IMR-90 (cell line): ENCODE measurements at regions of chr14 and their contacts with region 1.

Region 1: GRCh38 chr14:95534299-95535225 is at the start of gene GLRX5:
- DNase-seq: peak; percentile 100
- ATAC-seq: peak; percentile 86
- H3K4me3 ChIP-seq: peak within 1 kb of the TSS; percentile 71
- H3K27ac ChIP-seq: peak within 1 kb of the TSS; percentile 90
- H3K4me1 ChIP-seq: peaks cover 13% of the 10 kb centered on the region
- H3K27me3 ChIP-seq: no peaks in the 10 kb centered on the region
- CTCF ChIP-seq: no peak
- POLR2A ChIP-seq: peak; percentile 68
- RAD21 ChIP-seq: no peak
- total RNA-seq, gene GLRX5: 32.4 and 59.2 TPM in 2 replicates

Region 2: DNA sequence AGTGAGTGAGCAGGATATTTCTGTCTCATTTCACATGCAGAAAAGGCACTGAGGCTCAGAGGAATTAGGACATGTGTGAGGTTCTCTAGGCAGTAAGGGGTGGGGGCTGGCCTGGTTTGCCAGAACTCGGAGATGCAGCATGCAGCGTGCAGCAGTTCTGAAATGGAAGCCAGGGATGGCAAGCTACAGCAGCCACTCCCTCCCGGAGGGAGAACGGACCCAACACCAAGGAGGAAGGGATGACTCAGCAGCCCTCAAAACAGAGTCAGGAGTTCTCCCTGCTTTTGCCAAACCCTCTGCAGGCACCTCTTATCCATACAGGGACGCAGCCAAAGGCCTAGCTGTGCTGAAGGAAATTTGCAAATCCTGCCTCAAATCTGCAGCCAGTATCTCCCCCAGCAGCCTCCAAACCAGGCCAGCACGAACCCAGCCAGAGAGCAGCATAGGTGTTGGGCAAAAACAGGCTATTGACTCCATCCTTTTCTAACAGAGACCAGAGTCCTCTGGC is 932.6 kb before region 1 on chr14:
- CTCF ChIA-PET with region 1: no interaction called
- POLR2A ChIA-PET with region 1: no interaction called
- dilution Hi-C with region 1: no loop called
- in situ Hi-C with region 1: no loop called
- intact Hi-C with region 1: loop called (anchors 5 kb)
- DNase-seq: peak; percentile 89
- ATAC-seq: peak; percentile 69
- H3K4me3 ChIP-seq: no peak overlapping the region
- H3K27ac ChIP-seq: peak overlapping the region; percentile 96; the same call in 1 of the 2 replicates
- H3K4me1 ChIP-seq: peaks cover 20% of the 10 kb centered on the region
- H3K27me3 ChIP-seq: no peaks in the 10 kb centered on the region; the same call in 1 of the 2 replicates
- CTCF ChIP-seq: no peak
- POLR2A ChIP-seq: no peak
- RAD21 ChIP-seq: no peak

Region 3: GRCh38 chr14:95227279-95227860 is 307.2 kb before region 1 on chr14:
- CTCF ChIA-PET with region 1: no interaction called
- POLR2A ChIA-PET with region 1: no interaction called
- dilution Hi-C with region 1: no loop called
- in situ Hi-C with region 1: no loop called
- intact Hi-C with region 1: loop called (anchors 10 kb)
- DNase-seq: peak; percentile 12
- ATAC-seq: peak; percentile 49
- H3K4me3 ChIP-seq: no peak overlapping the region
- H3K27ac ChIP-seq: no peak overlapping the region
- H3K4me1 ChIP-seq: peaks cover 2% of the 10 kb centered on the region; the same call in 1 of the 2 replicates
- H3K27me3 ChIP-seq: no peaks in the 10 kb centered on the region; the same call in 1 of the 2 replicates
- CTCF ChIP-seq: no peak
- POLR2A ChIP-seq: no peak
- RAD21 ChIP-seq: no peak

Region 4: DNA sequence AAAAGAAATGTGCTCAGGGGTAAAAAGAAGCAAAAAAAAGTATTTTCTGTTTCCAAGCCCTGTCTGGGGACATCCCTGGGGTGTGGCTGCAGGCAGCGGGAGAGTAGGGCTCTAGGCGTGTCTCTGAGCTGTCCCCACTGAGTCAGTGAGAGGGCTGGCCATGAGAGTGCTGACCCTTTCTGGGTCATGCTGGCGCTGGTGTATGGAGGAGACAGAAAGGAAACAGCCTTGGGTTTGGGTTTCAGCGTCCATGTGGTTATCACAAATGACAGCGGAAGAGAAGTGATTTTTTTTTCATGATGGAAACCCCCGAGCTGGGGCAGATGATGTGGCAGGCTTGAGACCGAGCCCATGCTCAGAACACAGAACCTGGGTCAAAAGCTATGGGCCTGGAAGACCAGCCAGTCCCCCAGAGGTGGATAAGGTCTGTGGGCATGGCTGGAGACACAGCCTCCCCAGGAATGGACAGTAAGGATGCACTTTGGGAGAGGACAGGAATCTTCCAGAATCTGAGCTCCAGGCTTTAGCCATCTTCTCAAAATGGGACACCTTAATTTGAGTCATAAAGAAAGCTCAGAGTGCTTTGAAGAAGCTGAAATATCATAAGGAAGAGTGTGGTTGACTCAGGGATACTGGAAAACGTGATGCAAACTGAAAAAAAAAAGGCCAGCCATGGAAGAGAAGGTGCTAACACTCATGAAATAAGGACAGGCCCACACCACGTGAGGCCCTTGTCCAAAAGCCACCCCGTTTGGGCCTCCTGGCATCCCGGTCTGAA is 54.3 kb before region 1 on chr14:
- CTCF ChIA-PET with region 1: no interaction called
- POLR2A ChIA-PET with region 1: no interaction called
- dilution Hi-C with region 1: no loop called
- in situ Hi-C with region 1: no loop called
- intact Hi-C with region 1: no loop called
- DNase-seq: peak; percentile 31
- ATAC-seq: no peak
- H3K4me3 ChIP-seq: no peak overlapping the region
- H3K27ac ChIP-seq: no peak overlapping the region
- H3K4me1 ChIP-seq: peaks cover 29% of the 10 kb centered on the region
- H3K27me3 ChIP-seq: no peaks in the 10 kb centered on the region
- CTCF ChIP-seq: no peak
- POLR2A ChIP-seq: no peak
- RAD21 ChIP-seq: no peak

Region 5: DNA sequence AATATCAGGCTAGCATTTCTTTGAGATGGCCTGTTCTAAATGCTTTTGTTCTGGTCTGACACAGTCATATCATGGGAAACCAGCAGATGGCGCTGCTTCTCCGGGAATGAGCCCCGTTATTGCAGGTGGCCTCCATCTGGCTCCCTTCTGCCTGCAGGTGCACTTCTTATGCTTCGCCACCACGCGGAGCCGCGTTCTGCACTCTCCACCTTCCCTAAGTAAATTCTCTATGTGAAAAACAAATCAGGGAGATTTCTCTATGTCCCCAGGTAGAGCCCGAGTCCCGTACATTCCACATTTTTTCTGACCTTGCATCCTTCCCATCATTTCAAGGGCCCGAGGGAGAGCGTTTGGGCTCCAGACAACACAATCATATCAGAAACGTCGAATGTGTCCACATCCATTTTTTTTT is 26.4 kb after region 1 on chr14:
- CTCF ChIA-PET with region 1: no interaction called
- POLR2A ChIA-PET with region 1: interaction called, 13 read pairs
- dilution Hi-C with region 1: no loop called
- in situ Hi-C with region 1: no loop called
- intact Hi-C with region 1: no loop called
- DNase-seq: peak; percentile 82
- ATAC-seq: peak; percentile 88
- H3K4me3 ChIP-seq: no peak overlapping the region
- H3K27ac ChIP-seq: no peak overlapping the region
- H3K4me1 ChIP-seq: no peaks in the 10 kb centered on the region
- H3K27me3 ChIP-seq: peaks cover 7% of the 10 kb centered on the region
- CTCF ChIP-seq: peak; percentile 98
- POLR2A ChIP-seq: no peak
- RAD21 ChIP-seq: peak; percentile 96

Region 6: GRCh38 chr14:95609387-95609990 is 74.9 kb after region 1 on chr14:
- CTCF ChIA-PET with region 1: no interaction called
- POLR2A ChIA-PET with region 1: no interaction called
- dilution Hi-C with region 1: no loop called
- in situ Hi-C with region 1: no loop called
- intact Hi-C with region 1: no loop called
- DNase-seq: peak; percentile 23
- ATAC-seq: peak; percentile 49
- H3K4me3 ChIP-seq: no peak overlapping the region
- H3K27ac ChIP-seq: no peak overlapping the region
- H3K4me1 ChIP-seq: no peaks in the 10 kb centered on the region
- H3K27me3 ChIP-seq: peaks cover 3% of the 10 kb centered on the region
- CTCF ChIP-seq: peak; percentile 46
- POLR2A ChIP-seq: no peak
- RAD21 ChIP-seq: peak; percentile 48

Region 7: DNA sequence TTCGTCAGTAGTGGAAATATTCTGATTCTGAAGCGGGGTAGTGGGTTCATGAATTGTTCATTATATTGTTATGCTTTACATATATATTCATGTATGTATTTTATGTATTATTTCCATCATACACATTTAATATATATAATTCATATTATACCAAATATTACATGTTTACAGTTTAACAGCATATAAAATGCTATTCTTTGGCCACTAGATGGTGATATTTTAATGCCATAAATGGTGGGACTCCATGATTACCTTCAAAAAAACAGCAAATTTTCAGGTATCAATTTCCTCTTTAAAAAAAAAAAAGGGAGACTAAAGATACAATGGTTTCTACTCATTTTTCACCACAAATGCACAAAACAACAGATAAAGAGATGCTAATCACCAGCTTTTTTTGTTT is 762.4 kb after region 1 on chr14:
- CTCF ChIA-PET with region 1: no interaction called
- POLR2A ChIA-PET with region 1: no interaction called
- dilution Hi-C with region 1: no loop called
- in situ Hi-C with region 1: no loop called
- intact Hi-C with region 1: no loop called
- DNase-seq: peak; percentile 31
- ATAC-seq: peak; percentile 46; the same call in 1 of the 2 replicates
- H3K4me3 ChIP-seq: no peak overlapping the region
- H3K27ac ChIP-seq: no peak overlapping the region
- H3K4me1 ChIP-seq: peaks cover 5% of the 10 kb centered on the region; the same call in 1 of the 2 replicates
- H3K27me3 ChIP-seq: no peaks in the 10 kb centered on the region
- CTCF ChIP-seq: peak; percentile 60
- POLR2A ChIP-seq: no peak
- RAD21 ChIP-seq: peak; percentile 55